Activated T-helper 1 cell treated with anti-CD3 and anti-CD28 coated beads, Interleukin-12 subunit alpha, Interleukin-12 subunit beta, Interleukin-2, Interleukin-4 antibody, amounts not matched to agents 30 ng/mL and 10 ng/mL and 1 ng/mL, durations not matched to agents 14 hours and 24 hours and 36 hours (primary cell): ENCODE measurements at regions of chr1 and their contacts with region 1.

Region 1: GRCh38 chr1:182029379-182030331 is 31.9 kb downstream of the ZNF648 start:
- DNase-seq: peak; percentile 95
- H3K4me3 Mint-ChIP-seq: peak overlapping the region; percentile 91
- H3K27ac Mint-ChIP-seq: peak overlapping the region; percentile 94
- H3K4me1 Mint-ChIP-seq: peaks cover 12% of the 10 kb centered on the region
- H3K27me3 Mint-ChIP-seq: peaks cover 3% of the 10 kb centered on the region

Region 2: DNA sequence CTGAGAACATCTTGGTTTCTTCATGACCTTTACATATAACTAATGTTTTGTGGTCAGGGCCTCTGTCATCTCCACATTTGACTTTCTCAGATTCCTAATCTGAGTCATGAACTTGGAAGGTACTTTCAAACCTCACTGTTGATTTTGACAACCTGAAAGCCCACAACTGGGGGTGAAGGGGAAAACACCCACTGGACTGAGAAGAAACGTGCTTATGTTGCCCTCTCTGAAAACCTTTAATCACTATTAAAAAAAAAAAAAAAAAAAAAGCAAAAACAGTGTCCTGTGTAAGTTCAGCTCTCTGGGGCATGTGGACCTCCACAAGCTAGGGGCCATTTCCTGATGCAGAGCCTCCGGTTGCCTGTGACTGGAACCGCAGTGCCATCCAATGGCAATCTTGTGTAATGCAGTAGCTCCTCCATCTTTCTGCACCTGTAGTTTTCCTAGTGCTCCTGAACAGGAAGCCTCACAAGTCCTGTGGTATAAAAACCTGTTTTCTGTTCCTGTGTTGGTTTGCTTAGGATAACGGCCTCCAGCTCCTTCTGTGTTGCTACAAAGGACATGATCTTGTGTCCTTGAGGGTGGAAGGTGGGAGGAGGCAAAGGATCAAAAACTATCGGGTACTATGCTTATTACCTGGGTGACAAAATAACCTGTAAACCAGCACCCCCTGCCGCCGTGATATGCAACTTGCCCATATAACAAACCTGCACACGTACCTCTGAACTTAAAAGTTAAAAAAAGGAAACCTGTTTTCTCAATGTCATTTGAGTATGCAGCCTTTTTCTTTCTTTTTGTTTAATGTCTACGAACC is 92.7 kb before region 1 on chr1:
- intact Hi-C with region 1: loop called (anchors 1 kb)
- DNase-seq: peak; percentile 8
- H3K4me3 Mint-ChIP-seq: no peak overlapping the region
- H3K27ac Mint-ChIP-seq: no peak overlapping the region
- H3K4me1 Mint-ChIP-seq: no peaks in the 10 kb centered on the region
- H3K27me3 Mint-ChIP-seq: peaks cover 2% of the 10 kb centered on the region

Region 3: GRCh38 chr1:182084487-182085316 is 55.0 kb after region 1 on chr1:
- intact Hi-C with region 1: loop called (anchors 2 kb)
- DNase-seq: peak; percentile 76
- H3K4me3 Mint-ChIP-seq: peak overlapping the region; percentile 26
- H3K27ac Mint-ChIP-seq: peak overlapping the region; percentile 61
- H3K4me1 Mint-ChIP-seq: peaks cover 55% of the 10 kb centered on the region
- H3K27me3 Mint-ChIP-seq: no peaks in the 10 kb centered on the region

Region 4: DNA sequence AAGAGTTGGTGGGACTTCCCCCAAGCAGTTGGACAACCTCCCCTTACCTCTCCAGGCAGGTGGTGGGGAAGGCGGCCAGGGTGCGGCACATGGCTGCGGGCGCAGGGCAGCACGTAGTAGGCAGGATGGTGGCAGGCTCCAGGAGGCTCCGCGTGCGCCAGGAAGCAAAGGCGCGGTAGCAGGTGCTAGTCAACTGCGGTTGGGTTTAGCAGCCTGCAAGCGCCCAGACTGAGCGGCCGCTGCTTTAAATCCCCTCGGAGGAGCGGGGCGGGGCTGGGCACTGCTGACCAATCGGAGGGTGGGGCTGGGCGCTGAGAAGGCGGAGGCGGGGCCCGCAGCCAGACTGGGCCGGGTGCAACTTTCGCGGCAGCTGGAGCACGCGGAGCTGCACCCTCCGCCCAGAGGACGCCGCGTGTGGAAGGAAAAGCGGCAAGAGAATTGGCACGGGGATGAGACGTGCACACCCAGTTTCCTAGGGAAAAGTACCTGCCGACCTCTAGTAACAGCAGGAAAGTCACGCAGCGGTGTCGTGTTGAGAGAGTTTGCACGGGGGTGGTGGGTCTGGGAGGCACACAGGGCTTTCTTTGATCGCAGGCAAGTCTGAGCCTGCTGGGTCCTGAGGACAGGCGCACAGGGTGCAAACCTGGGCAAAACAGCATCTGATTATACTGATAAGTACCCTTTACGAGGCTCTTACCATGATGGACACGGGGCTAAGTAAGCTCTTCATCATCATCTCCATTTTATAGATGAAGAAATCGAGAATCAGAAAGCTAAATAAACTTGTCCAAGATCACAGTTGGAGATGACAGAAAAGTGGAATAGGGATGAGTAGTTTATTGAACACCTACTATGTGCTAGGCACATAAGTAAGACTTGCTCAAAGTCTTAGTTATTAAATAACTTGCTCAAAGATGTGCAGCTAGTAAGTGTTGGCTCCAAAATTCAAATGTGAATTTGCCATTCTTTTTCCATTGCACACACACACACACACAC is 574.8 kb after region 1 on chr1 and contains the start of gene RGS16:
- intact Hi-C with region 1: loop called (anchors 5 kb)
- DNase-seq: peak; percentile 91
- H3K4me3 Mint-ChIP-seq: peak within 1 kb of the TSS; percentile 25
- H3K27ac Mint-ChIP-seq: no peak within 1 kb of the TSS
- H3K4me1 Mint-ChIP-seq: peaks cover 50% of the 10 kb centered on the region
- H3K27me3 Mint-ChIP-seq: peaks cover 2% of the 10 kb centered on the region
- total RNA-seq, gene RGS16: 138 and 143 TPM in 2 replicates

Region 5: DNA sequence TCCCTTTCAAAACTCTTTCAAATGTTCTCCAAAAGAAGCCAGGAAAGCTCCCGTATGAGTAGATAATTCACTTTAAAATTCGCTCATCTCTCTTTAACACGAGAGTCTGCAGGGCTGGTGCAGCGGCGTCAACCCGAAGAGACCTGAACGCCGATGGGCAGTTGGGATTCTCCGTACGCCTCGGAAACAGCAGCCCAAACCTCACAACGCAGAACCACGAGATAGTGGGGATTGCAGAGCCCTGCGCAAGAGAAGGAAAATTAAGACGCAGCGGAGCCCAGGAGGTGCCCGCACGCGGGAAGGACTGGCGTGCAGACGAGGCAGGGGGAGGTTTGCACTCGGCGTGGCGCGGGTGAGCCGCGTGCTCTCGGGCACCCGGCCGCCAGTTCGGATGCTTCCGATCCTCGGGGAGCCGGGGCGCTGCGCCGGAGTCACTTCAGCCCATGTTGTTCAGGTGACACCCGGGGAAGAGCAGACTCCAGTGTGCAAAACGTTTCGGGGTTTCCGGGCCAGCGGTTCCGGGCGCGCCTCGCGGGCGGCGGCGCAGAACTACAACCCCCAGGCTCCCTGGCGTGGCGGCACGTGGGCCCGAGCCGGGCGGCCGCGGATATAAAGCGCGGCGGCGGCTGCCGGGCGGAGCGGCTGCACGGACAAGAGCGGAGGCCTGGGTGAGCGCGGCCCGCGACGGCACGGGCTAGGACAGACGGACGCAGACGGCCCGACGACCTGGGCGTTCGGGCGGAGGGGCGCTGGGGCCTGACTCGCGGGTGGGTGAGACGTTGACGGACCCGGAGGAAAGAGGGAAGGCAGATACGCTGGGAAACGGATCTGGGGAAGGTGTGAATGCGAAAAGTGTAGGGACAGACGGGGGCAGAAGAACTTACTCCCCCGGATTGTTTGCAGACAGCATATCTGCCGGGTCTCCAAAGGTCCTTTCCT is 759.8 kb after region 1 on chr1 and contains the start of gene NPL:
- intact Hi-C with region 1: loop called (anchors 1 kb)
- DNase-seq: peak; percentile 86
- H3K4me3 Mint-ChIP-seq: peak within 1 kb of the TSS; percentile 92
- H3K27ac Mint-ChIP-seq: peak within 1 kb of the TSS; percentile 86
- H3K4me1 Mint-ChIP-seq: peaks cover 18% of the 10 kb centered on the region
- H3K27me3 Mint-ChIP-seq: peaks cover 14% of the 10 kb centered on the region
- total RNA-seq, gene NPL: 6.4 and 6.9 TPM in 2 replicates

Region 6: DNA sequence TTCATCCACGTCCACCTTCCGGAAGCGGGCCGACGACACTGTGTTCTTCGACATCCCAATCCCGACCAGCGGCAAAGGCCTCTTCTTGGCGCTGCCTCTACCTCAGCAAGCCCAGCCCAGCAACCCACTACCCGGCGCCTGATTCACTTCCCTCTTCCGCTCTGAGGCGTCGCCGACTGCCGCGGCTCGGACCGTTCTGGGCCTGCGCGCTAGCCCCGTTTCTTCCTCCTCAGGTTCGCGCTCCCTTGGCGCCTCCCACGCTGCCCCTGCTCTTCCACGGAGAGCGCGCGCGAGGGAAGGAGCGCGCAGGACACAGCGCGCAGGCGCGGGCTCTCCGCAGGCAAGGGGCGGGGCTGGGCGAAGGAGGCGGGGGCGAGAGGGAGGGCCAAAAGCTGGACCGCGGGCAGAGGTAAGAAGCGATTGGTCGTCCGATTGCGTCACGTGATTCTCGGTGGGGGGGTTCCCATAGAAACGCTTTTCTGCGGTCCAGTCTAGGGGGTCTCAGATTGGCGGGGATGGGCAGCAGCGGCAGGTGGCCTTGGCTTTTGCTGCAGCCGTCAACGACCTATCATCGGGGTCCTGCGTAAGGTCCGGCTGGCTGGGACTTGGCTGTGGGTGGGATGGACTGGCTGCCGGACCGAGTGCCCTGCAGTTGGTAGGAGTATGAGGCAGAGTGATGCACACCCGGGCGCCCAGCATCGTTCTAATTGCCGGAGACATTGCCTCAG is 1606.1 kb after region 1 on chr1 and contains the start of gene ARPC5:
- intact Hi-C with region 1: loop called (anchors 5 kb)
- DNase-seq: peak; percentile 96
- H3K4me3 Mint-ChIP-seq: peak within 1 kb of the TSS; percentile 100
- H3K27ac Mint-ChIP-seq: peak within 1 kb of the TSS; percentile 100
- H3K4me1 Mint-ChIP-seq: peaks cover 46% of the 10 kb centered on the region
- H3K27me3 Mint-ChIP-seq: peaks cover 4% of the 10 kb centered on the region
- total RNA-seq, gene ARPC5: 146 and 154 TPM in 2 replicates